Lower leg skin (tissue), 4 donors: ENCODE measurements at regions of chr5 and their contacts with region 1.

Region 1: GRCh38 chr5:139633295-139634027 is 14.7 kb upstream of the CXXC5 start:
- DNase-seq: peak in 1 of 2 donors; percentile 92
- H3K4me3 ChIP-seq: no peak overlapping the region
- CTCF ChIP-seq: peak in 2 of 3 donors; percentile 83 to 90
- POLR2A ChIP-seq: no peak

Region 2: DNA sequence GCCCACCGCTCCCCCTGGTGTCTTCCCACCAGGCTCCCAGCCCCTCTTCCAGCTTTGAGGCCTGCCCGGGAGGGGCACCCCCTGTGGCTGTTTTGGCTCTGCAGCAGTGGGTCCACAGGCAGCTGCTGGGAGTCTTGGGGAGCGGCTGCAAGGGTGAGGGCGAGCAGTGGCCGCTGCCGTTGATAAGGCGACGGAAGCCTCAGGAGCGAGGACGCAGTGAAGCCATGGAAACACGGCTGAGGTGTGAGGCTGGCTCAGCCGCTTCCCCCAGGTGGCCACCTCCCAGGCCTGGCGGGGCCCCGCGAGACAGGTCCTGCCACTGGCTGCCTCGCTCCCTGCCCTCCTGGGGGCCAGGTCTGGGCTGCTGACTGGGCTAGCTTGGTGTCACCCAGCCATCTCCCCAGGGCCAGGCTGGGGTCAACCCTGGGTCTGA is 56.2 kb after region 1 on chr5:
- intact Hi-C with region 1: loop called (anchors 5 kb)
- DNase-seq: no peak
- H3K4me3 ChIP-seq: no peak overlapping the region
- CTCF ChIP-seq: no peak
- POLR2A ChIP-seq: no peak

Region 3: DNA sequence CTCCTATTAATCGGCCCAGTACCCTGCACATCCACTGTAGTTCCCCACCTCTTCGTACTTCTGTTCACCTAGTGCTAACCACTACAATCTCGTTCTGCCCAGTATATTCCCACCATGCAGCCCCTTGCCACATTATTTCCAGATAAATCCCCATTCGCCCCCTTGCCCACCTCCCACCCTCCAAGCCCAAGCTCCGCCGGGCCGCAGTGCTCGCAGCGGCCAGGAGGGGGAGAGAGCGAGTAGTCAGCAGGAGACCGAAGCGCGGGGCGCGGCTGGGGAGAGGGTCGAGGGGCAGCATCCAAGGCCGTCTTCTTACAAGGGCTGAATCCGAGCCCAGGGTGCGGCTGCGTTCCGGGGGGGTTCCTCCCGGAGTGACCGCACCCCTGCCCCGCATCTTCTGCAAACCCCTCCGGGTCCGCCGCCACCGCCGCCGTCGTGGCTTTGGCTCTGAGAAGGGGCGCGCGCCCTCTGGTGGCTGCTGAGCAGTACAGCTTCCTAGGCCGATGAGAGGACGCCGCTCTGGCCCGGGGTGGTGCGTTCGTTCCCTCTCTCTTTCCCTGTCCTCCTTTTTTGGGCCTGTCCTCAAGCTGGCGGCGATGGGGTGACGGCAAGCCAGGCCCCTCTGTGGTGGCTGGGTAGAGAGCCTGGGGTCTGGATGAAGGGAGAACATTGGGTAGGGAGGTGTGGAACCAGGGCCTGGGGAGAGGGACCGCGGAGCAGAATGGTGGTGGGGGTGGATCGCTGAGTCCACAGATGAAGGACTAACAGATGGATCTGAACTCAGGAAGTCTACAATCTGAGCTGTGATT is 132.2 kb after region 1 on chr5:
- intact Hi-C with region 1: loop called (anchors 5 kb)
- DNase-seq: peak; percentile 45 to 94
- H3K4me3 ChIP-seq: no peak overlapping the region
- CTCF ChIP-seq: peak in 1 of 3 donors; percentile 93
- POLR2A ChIP-seq: no peak